Activated naive CD4-positive, alpha-beta T cell treated with anti-CD3 and anti-CD28 coated beads for 36 hours (primary cell): ENCODE measurements at regions of chr16 and their contacts with region 1.

Region 1: DNA sequence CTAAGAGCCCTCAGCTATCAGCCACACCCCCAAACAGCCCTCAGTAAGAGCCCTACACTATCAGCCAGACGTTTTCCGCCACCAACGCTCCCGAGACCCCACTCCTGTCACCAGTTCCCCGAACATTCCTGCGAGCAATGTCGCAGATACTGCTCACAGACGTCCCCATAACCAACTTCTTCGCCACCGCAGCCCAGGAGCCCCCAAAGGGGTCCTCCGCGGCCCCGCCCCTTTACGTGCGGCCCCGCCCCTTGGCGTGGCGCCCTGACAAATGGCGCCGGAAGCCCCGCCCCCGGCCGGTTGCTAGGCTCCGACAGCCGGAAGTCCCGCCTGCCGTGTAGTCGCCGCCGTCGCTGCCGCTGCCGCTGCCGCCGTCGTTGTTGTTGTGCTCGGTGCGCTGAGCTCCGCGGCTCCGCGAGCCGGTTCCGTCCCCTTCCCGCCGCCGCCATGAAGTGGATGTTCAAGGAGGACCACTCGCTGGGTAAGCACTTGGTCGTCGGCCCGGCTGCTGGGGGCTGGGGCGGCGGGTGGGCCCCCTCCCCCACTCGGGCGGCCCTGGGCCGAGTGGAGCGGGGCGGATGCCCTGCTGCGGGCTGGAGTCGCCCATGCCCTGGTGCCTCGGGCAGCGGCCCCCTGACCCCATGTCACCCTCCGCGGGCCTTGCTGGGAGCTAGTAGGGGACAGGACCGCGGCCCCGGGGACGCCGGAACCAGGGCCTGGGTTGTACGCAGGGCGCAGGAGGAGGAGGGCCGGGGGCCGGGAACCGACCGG is at the start of gene GABARAPL2:
- DNase-seq: peak; percentile 89
- H3K4me3 Mint-ChIP-seq: peak within 1 kb of the TSS; percentile 98
- H3K27ac Mint-ChIP-seq: peak within 1 kb of the TSS; percentile 94
- H3K4me1 Mint-ChIP-seq: peaks cover 38% of the 10 kb centered on the region
- H3K27me3 Mint-ChIP-seq: peaks cover 3% of the 10 kb centered on the region
- total RNA-seq, gene GABARAPL2: 63.3 to 66.8 TPM

Region 2: DNA sequence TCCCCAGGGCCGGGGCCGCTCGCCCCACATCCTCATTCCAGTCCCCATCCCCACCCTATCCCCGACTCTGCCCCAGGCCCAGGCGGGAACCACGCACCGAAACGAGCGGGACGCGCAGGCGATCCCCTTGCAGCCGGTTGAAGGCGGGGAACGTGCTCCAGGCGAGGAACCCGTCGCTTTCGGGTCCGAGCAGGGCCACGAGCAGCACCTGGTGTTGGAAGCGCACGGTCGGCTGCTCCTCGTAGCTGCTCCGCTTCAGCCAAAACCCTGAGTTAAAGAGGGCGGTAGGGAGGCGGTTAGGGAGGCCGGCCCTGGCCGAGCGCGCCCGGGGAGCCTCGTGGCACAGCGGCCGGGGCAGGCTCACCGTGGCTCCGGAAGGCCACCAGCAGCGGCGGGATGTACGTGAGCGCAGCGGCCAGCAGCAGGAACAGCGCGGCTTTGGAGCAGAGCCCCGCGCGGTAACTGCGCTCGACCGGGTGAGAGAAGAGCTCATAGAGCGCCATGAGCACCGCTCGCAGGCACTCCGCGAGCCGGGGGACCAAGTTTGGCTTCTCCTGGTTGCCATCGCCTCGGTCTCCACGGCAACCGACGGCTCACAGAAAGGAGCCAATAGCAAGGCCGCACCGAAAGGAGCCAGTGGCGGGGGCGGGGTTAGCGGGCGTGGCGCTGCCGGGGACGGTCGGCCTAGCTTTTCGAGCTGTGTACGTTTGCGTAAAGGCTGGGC is 10.4 kb before region 1 on chr16 and contains the start of gene TMEM231:
- CTCF ChIA-PET with region 1: no interaction called
- intact Hi-C with region 1: loop called (anchors 1 kb)
- DNase-seq: peak; percentile 98
- H3K4me3 Mint-ChIP-seq: peak within 1 kb of the TSS; percentile 87
- H3K27ac Mint-ChIP-seq: peak within 1 kb of the TSS; percentile 77
- H3K4me1 Mint-ChIP-seq: peaks cover 5% of the 10 kb centered on the region
- H3K27me3 Mint-ChIP-seq: peaks cover 8% of the 10 kb centered on the region
- total RNA-seq, gene TMEM231: 4.5 to 5.4 TPM

Region 3: DNA sequence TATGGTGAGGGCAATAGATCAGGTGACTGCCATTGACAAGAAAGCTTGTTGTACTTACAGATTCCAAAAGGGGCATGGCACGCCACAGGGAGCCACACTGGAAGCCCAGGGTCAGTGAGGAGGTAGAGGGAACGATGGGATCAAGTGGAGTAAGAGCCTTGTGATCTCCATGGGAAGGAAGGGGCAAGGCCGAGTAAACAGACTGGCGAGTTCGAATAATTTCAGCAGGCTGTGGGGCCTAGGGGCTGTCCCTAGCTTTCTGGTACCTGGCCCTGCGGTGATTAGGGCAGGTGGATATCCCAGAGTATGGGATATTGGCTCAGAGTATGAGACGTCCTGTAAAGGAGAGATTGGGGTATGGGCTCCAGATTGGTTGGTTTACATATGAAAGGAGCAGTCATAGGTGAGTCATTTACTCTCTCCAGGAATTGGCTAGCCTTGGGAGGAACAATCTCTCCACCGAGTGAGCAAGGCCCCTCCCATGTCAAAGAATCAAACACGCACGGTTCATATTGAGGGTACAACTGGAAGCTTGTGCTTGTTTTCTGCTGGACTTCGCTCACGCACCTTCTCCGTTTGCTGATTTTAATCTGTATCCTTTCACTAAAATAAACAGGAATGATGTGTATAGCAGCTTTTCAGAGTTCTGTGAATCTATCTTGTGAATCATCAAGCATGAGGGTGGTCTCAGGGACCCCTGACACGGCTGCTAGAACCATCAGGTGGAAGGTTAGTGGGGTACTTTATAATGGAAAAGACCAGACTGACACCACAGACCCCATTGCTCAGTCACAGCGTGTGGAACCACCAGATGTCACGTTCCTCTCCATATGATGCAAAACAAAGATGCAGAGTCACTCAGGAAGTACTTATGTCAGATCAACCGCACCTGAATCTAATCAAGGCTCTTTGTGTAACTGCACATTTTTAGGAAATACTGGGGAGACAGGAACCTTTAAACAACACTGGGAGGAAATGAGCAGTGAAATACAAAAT is 27.9 kb after region 1 on chr16:
- CTCF ChIA-PET with region 1: no interaction called
- intact Hi-C with region 1: loop called (anchors 1 kb)
- DNase-seq: peak; percentile 34
- H3K4me3 Mint-ChIP-seq: no peak overlapping the region
- H3K27ac Mint-ChIP-seq: peak overlapping the region; percentile 13
- H3K4me1 Mint-ChIP-seq: peaks cover 14% of the 10 kb centered on the region
- H3K27me3 Mint-ChIP-seq: no peaks in the 10 kb centered on the region